CD14-positive monocyte (primary cell): ENCODE measurements at regions of chr4 and their contacts with region 1.

Region 1: DNA sequence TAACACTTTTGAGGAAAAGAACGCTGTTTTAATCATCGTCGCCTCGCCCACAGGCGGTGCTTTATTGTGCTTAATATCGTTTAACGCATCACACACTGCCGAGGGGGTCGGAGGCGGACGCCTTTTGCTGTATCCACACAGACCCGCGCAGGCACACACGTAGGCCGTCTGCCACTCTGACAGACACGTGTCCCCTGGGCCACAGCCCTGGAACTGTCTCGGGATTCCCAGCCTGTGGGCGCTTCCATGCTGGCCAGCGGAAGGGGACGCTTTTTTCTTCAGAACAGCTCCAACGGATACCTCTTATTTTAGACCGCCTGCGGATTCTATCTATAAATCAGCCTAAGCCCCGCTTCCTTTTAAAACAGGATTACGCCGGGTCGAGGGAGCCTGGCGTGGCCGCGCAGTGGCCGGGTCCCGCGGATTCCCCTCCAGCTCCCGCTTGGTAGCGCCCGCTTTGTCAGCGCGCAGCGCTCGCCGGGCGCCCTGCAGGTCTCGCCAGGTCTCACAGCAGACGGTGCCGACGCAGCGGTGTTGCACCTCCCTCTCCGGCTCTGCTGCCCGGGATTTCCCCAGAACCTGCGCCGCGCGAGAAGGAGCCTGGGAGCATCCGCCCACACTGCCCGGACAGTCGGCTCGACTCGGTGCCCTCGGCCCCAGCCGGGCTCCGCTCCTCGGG is at the start of gene NOCT:
- DNase-seq: peak; percentile 88 to 95 (median 91)
- H3K4me3 ChIP-seq: peak within 1 kb of the TSS; percentile 67 to 86 (median 86)
- H3K4me3 Mint-ChIP-seq: peak within 1 kb of the TSS; percentile 95
- H3K27ac ChIP-seq: peak within 1 kb of the TSS; percentile 83 to 92
- H3K27ac Mint-ChIP-seq: peak within 1 kb of the TSS; percentile 98 to 99 (median 99)
- H3K4me1 ChIP-seq: peaks cover 48 to 63% of the 10 kb centered on the region in 2 donors
- H3K4me1 Mint-ChIP-seq: peaks cover 52% of the 10 kb centered on the region
- H3K27me3 ChIP-seq: no peaks in the 10 kb centered on the region
- H3K27me3 Mint-ChIP-seq: peaks cover 0 to 3% (median 0%) of the 10 kb centered on the region in 3 donors
- CTCF ChIP-seq: peak; percentile 13
- polyA plus RNA-seq, gene NOCT: 0.54 to 31.5 (median 0.89) TPM

Region 2: DNA sequence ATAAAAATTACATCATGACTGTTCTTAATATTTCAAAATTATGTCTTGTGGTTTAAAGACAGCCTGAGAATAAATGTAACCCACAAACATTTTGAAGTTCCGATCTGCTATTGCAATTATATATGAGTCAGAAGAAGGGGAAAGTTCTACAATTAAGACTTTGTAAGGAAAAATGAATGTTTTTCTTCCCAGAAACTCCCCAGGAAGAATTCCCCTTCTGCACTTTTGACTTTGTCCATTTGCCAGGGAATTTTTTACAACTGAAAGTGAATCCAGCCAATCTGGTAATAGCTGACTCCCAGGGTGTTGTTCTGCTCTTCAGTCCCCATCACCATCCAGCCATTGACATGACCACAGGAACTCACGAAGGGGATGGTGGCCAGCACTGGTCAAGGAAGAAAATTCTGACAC is 61.4 kb before region 1 on chr4:
- intact Hi-C with region 1: loop called in 1 of 2 experiments (anchors 10 kb)
- DNase-seq: peak; percentile 46 to 86 (median 72)
- H3K4me3 ChIP-seq: peak overlapping the region in 1 of 3 experiments; percentile 25
- H3K4me3 Mint-ChIP-seq: peak overlapping the region in 1 of 2 donors; percentile 69
- H3K27ac ChIP-seq: peak overlapping the region in 1 of 2 donors; percentile 62
- H3K27ac Mint-ChIP-seq: peak overlapping the region; percentile 83 to 93 (median 89)
- H3K4me1 ChIP-seq: peaks cover 49% of the 10 kb centered on the region in 2 donors
- H3K4me1 Mint-ChIP-seq: peaks cover 52% of the 10 kb centered on the region
- H3K27me3 ChIP-seq: no peaks in the 10 kb centered on the region
- H3K27me3 Mint-ChIP-seq: peaks cover 0 to 3% (median 1%) of the 10 kb centered on the region in 3 donors
- CTCF ChIP-seq: no peak

Region 3: DNA sequence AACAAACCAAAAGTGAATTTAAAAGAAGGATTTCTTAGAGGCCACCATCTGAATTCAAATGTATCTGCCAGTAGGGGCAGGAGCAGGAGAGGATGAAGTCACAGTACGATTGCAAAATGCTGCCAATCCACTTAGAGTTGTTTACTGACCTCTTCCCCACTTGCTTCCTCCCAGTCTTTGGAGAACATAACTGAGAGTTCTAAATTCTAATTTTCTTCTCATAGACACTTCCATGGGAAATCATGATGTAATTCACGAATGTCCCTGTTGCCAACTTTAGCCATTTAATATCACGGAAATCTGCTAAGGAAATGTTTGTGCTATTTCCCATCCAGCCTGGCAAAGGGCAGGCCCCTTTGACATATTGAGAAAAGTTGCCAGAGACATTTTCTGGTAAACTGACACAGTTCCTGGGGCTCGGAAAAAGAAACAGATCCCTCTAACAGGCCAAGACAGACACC is 33.4 kb before region 1 on chr4:
- intact Hi-C with region 1: loop called (anchors 5 kb)
- DNase-seq: peak; percentile 67 to 88 (median 85)
- H3K4me3 ChIP-seq: no peak overlapping the region
- H3K4me3 Mint-ChIP-seq: no peak overlapping the region
- H3K27ac ChIP-seq: peak overlapping the region; percentile 20 to 78
- H3K27ac Mint-ChIP-seq: peak overlapping the region; percentile 82 to 92 (median 90)
- H3K4me1 ChIP-seq: peaks cover 41 to 44% of the 10 kb centered on the region in 2 donors
- H3K4me1 Mint-ChIP-seq: peaks cover 37% of the 10 kb centered on the region
- H3K27me3 ChIP-seq: no peaks in the 10 kb centered on the region
- H3K27me3 Mint-ChIP-seq: peaks cover 0 to 1% (median 0%) of the 10 kb centered on the region in 3 donors
- CTCF ChIP-seq: peak; percentile 39

Region 4: DNA sequence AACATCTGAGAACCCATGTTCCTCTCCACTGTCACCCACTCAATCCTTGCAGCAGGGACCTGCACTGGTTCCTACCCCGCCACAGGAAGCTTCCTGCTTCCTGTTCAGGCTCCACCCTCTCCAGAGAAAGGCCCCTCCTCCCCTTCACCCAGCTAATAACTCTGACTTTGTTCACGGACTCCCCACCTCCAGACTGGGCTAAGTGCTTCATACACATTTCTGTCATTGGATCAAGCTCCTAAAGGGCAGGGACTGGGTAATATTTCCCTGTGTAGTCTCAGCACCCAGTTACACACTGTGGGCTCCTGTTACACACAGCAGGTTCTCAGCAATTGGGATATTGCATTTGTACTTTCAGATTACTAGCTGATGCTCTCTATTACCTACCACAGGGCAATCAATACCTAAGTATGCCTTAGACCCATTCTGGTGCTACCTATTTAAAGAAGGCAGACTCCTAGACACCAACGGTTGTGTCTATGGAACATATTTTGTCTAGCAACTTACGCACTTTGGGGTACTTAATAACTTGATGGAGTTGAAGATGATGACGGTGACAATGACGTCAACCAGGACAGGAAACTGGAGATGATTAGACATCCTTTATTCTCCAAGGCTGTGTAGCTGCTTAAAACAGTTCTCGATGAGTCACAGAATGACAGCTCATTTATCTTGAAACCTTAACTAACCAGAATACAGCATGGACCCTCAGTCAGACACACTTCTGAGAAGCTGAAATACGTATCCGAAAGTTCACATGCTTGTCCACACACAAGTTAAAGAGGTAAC is 1080.5 kb after region 1 on chr4:
- intact Hi-C with region 1: loop called in 1 of 2 experiments (anchors 10 kb)
- DNase-seq: peak; percentile 93 to 98 (median 98)
- H3K4me3 ChIP-seq: peak overlapping the region; percentile 29 to 68 (median 30)
- H3K4me3 Mint-ChIP-seq: peak overlapping the region; percentile 75 to 85
- H3K27ac ChIP-seq: peak overlapping the region; percentile 96 to 97
- H3K27ac Mint-ChIP-seq: peak overlapping the region; percentile 92 to 99 (median 98)
- H3K4me1 ChIP-seq: peaks cover 99 to 100% of the 10 kb centered on the region in 2 donors
- H3K4me1 Mint-ChIP-seq: peaks cover 99% of the 10 kb centered on the region
- H3K27me3 ChIP-seq: no peaks in the 10 kb centered on the region
- H3K27me3 Mint-ChIP-seq: no peaks in the 10 kb centered on the region
- CTCF ChIP-seq: no peak